Sciatic nerve (tissue), 2 donors: ENCODE measurements at regions of chr17 and their contacts with region 1.

Region 1: GRCh38 chr17:17641621-17642409 is 39.4 kb upstream of the RAI1 start:
- DNase-seq: peak; percentile 88
- ATAC-seq: peak; percentile 89

Region 2: DNA sequence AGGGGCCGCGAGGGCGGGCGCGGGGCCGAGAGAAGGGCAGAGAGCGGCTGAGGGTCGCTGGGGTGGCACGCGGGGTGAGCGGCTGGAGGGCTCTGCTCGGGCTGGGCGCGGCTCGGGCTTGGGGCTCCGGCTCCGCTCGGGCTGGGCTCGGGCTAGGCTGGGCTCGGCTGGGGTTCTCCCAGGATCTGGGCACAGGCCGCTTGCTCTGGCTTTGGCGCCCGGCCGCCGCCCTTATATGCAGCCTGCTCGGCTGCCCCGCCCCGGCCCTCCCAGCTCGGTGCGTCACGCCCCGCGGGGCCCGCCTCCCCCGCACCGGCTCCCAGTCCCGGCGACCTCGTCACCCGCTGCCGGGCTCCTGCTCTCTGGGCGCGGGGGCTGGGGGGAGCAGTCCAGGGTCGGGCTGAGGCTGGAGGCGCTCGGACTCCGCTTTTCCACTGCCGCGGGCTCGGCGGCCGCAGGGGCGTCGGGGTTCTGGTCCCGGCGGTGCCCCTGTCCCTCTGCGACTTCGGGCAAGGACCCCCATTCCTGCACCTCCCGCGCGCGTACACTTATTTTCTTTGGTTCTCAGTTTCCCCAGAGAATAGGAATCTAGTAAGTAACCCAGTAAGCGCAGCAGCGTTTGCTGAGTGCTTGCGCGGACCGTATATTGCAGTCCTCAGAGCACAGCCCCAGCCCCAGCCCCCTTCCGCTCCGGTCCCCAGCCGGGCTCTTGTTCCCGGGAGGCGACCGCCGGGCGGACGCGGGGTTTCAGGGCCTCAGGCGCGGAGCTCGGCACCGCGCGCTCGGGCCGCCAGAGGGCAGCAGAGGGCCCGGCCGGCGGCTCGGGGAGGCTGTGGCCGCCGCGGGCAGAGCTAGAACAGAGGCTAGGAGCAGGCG is 145.4 kb before region 1 on chr17 and contains the start of gene RASD1:
- intact Hi-C with region 1: loop called (anchors 10 kb)
- DNase-seq: peak; percentile 96
- ATAC-seq: peak; percentile 92
- total RNA-seq, gene RASD1: 58.6 TPM

Region 3: DNA sequence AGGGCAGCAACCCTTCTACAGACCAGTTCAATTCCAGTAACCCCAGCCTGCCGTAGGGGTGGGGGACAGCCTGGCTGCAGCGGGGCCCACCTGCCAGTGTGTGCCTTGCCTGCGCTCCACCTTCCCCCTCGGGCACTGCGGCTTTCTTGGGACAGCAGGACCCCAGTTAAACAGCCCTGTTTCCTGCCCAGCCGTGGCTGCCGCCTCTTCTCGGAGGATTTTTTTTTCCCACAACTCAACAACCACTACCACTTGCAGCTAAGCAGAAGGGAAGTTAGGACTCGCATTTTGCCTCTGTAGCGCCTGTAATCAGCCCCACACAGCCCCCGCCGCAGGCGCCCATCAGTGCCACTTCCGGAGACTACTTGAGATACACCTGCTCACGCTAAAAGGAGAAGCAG is 115.6 kb after region 1 on chr17:
- intact Hi-C with region 1: no loop called
- DNase-seq: no peak
- ATAC-seq: no peak